ENCODE measurements at regions of chr6 and their contacts with region 1.

Region 1: GRCh38 chr6:158213925-158214674 is 46.0 kb downstream of the GTF2H5 start:
- DNase-seq: peak; percentile 73 to 74
- H3K4me3 ChIP-seq: no peak overlapping the region
- H3K4me3 Mint-ChIP-seq: no peak overlapping the region
- H3K27ac Mint-ChIP-seq: no peak overlapping the region
- H3K4me1 ChIP-seq: no peaks in the 10 kb centered on the region
- H3K4me1 Mint-ChIP-seq: no peaks in the 10 kb centered on the region
- H3K27me3 ChIP-seq: no peaks in the 10 kb centered on the region
- H3K27me3 Mint-ChIP-seq: no peaks in the 10 kb centered on the region
- CTCF ChIP-seq: peak; percentile 75 to 82

Region 2: GRCh38 chr6:158270389-158271127 is 56.5 kb after region 1 on chr6:
- CTCF ChIA-PET with region 1: no interaction called
- POLR2A ChIA-PET with region 1: no interaction called
- intact Hi-C with region 1: no loop called
- DNase-seq: no peak
- H3K4me3 ChIP-seq: no peak overlapping the region
- H3K4me3 Mint-ChIP-seq: no peak overlapping the region
- H3K27ac Mint-ChIP-seq: no peak overlapping the region
- H3K4me1 ChIP-seq: no peaks in the 10 kb centered on the region
- H3K4me1 Mint-ChIP-seq: no peaks in the 10 kb centered on the region
- H3K27me3 ChIP-seq: no peaks in the 10 kb centered on the region
- H3K27me3 Mint-ChIP-seq: no peaks in the 10 kb centered on the region
- CTCF ChIP-seq: no peak

Region 3: GRCh38 chr6:158518191-158519127 is 304.4 kb after region 1 on chr6:
- CTCF ChIA-PET with region 1: interaction called, 13 read pairs
- POLR2A ChIA-PET with region 1: no interaction called
- intact Hi-C with region 1: loop called (anchors 1 kb)
- DNase-seq: peak; percentile 70 to 73
- H3K4me3 ChIP-seq: peak overlapping the region; percentile 11
- H3K4me3 Mint-ChIP-seq: peak overlapping the region; percentile 73
- H3K27ac Mint-ChIP-seq: no peak overlapping the region
- H3K4me1 ChIP-seq: no peaks in the 10 kb centered on the region
- H3K4me1 Mint-ChIP-seq: peaks cover 6% of the 10 kb centered on the region
- H3K27me3 ChIP-seq: no peaks in the 10 kb centered on the region
- H3K27me3 Mint-ChIP-seq: no peaks in the 10 kb centered on the region
- CTCF ChIP-seq: peak in 1 of 2 experiments; percentile 68

Region 4: GRCh38 chr6:158605266-158605878 is 391.3 kb after region 1 on chr6:
- CTCF ChIA-PET with region 1: interaction called, 10 read pairs
- POLR2A ChIA-PET with region 1: no interaction called
- intact Hi-C with region 1: loop called (anchors 1 kb)
- DNase-seq: peak; percentile 69 to 75
- H3K4me3 ChIP-seq: no peak overlapping the region
- H3K4me3 Mint-ChIP-seq: no peak overlapping the region
- H3K27ac Mint-ChIP-seq: peak overlapping the region; percentile 45
- H3K4me1 ChIP-seq: peaks cover 6% of the 10 kb centered on the region
- H3K4me1 Mint-ChIP-seq: peaks cover 17% of the 10 kb centered on the region
- H3K27me3 ChIP-seq: no peaks in the 10 kb centered on the region
- H3K27me3 Mint-ChIP-seq: no peaks in the 10 kb centered on the region
- CTCF ChIP-seq: peak; percentile 53 to 69

Region 5: DNA sequence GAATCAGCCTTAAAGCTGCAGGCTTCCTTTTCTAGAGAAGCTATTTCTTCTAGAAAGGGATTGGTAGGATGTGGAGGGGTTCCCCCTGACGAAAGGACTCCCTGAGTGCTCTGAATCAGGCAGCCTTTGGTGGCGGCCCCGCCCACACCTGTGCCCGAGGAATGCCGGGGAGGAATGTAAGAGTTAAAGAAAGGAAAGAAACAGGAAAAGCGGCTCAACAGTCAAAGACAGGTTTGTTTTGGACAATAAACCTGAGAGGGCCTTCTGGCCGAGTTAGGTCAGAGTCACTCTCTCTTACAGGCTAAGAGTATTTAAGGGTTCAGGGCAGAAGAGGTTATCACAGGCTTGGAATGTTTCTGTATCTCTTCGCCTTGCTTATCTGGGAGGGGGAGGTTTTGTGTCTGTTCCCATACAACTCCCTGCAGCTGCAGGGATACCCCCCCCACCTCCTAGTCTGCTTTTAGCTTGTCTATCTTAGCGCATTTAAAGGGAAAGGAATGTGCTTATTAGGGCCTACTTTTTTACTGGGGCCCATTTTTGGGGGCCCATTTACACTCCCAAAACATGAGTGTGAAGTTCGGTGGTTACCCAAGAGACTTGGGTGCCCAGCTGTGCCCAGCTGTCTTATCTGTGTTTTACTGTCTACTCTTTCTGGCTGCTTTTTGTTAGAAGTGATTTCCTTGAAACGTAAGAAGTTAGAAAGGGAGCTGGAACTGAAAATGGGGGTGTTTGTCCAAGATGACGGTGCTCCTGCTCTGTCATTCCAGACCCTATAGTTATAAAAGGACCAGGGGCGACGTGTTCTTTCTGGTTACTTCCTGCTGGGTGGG is 397.7 kb after region 1 on chr6:
- CTCF ChIA-PET with region 1: interaction called, 6 read pairs
- POLR2A ChIA-PET with region 1: no interaction called
- intact Hi-C with region 1: loop called (anchors 2 kb)
- DNase-seq: peak; percentile 87 to 89
- H3K4me3 ChIP-seq: peak overlapping the region; percentile 11; the same call in 1 of the 2 replicates
- H3K4me3 Mint-ChIP-seq: peak overlapping the region; percentile 50
- H3K27ac Mint-ChIP-seq: peak overlapping the region; percentile 75
- H3K4me1 ChIP-seq: peaks cover 35% of the 10 kb centered on the region
- H3K4me1 Mint-ChIP-seq: peaks cover 35% of the 10 kb centered on the region
- H3K27me3 ChIP-seq: no peaks in the 10 kb centered on the region
- H3K27me3 Mint-ChIP-seq: no peaks in the 10 kb centered on the region
- CTCF ChIP-seq: no peak

Region 6: DNA sequence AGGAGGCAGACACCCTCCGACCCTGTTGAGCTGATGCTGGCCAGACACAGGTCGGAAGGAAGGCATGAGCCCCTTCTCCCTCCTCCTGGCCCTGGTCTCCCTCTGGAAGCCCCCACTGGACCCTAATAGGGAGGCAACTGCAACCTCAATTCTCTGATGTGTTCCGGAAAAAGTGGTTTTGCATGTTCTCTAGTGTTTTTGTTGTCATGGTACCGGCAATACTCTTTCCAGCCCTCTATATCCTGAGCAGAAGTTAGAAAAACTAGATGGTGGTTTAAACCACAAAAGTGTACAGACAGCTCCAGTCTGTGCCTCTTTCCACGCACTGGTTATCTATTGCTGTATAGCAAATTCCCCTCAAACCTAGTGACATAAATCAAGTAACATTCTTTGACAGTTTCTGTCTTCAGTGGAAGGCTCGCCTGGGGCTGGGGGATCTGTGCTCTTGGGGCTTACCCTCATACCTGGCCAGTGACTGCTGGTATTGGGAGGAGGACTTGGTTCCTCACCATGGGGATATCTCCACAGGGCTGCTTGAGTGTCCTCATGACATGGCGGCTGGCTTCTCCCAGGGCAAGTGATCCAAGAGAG is 472.8 kb after region 1 on chr6:
- CTCF ChIA-PET with region 1: interaction called, 21 read pairs
- POLR2A ChIA-PET with region 1: no interaction called
- intact Hi-C with region 1: loop called (anchors 1 kb)
- DNase-seq: no peak
- H3K4me3 ChIP-seq: no peak overlapping the region
- H3K4me3 Mint-ChIP-seq: no peak overlapping the region
- H3K27ac Mint-ChIP-seq: peak overlapping the region; percentile 3
- H3K4me1 ChIP-seq: no peaks in the 10 kb centered on the region
- H3K4me1 Mint-ChIP-seq: peaks cover 11% of the 10 kb centered on the region
- H3K27me3 ChIP-seq: no peaks in the 10 kb centered on the region
- H3K27me3 Mint-ChIP-seq: no peaks in the 10 kb centered on the region
- CTCF ChIP-seq: no peak

Measured in Caco-2 (cell line).